ENCODE measurements at regions of chr1 and their contacts with region 1.

Region 1: DNA sequence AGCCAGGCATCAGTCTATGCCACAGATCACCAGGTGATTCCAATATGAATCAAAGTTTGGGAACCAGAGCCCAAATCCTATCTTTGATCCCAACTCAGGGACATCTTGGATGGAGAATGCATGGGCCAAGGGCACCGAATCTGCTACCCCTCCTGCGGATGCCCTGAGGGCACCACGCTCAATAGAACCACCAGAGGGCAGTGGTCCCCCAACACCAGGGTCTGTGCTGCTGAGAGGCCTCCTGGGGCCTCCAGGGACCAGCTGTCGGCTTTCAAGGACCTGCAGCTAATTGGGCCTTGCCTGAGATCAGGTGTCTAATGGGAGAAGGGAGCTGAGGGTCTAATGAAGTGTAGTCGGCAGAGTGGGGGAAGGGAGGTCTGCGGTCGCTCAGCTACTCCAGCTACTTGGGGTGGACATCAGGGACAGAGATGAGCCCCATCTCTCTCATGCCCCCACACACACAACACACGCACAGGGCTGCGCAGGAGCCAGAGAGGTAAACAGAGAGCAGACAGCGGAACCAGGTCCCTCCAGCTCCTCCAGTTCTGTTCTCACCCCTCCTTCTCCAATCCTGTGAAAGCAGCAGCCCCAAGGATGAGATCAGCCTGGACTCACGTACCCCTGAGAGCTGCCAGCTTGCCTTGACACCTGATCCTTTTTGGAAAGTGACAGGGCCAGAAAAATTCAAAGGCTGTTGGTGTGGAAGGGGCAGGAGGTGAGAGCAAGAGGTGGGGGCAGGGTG is 34.9 kb upstream of the PPP1R15B start:
- DNase-seq: no peak
- H3K4me3 ChIP-seq: no peak overlapping the region
- H3K27me3 ChIP-seq: no peaks in the 10 kb centered on the region
- CTCF ChIP-seq: peak; percentile 78

Region 2: DNA sequence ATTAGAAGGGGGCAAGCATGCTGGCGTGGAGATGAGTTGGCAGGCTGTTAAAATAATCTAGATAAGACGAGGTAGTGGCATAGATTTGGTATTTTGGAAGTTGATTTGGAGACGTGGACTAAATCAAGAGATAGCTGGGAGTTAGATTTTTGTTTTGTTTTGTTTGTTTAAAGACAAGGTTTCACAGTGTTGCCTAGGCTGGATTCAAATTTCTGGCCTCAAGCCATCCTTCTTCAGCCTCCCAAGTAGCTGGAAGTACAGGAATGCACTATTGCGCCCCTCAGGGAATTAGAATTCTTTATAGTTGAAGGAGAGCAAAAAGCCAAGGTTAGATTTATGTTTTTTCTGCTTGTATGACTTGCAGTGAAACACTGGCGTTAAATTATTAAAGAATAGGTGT is 607.5 kb before region 1 on chr1:
- CTCF ChIA-PET with region 1: no interaction called
- POLR2A ChIA-PET with region 1: no interaction called
- DNase-seq: no peak
- H3K4me3 ChIP-seq: no peak overlapping the region
- H3K27me3 ChIP-seq: no peaks in the 10 kb centered on the region
- CTCF ChIP-seq: no peak

Region 3: DNA sequence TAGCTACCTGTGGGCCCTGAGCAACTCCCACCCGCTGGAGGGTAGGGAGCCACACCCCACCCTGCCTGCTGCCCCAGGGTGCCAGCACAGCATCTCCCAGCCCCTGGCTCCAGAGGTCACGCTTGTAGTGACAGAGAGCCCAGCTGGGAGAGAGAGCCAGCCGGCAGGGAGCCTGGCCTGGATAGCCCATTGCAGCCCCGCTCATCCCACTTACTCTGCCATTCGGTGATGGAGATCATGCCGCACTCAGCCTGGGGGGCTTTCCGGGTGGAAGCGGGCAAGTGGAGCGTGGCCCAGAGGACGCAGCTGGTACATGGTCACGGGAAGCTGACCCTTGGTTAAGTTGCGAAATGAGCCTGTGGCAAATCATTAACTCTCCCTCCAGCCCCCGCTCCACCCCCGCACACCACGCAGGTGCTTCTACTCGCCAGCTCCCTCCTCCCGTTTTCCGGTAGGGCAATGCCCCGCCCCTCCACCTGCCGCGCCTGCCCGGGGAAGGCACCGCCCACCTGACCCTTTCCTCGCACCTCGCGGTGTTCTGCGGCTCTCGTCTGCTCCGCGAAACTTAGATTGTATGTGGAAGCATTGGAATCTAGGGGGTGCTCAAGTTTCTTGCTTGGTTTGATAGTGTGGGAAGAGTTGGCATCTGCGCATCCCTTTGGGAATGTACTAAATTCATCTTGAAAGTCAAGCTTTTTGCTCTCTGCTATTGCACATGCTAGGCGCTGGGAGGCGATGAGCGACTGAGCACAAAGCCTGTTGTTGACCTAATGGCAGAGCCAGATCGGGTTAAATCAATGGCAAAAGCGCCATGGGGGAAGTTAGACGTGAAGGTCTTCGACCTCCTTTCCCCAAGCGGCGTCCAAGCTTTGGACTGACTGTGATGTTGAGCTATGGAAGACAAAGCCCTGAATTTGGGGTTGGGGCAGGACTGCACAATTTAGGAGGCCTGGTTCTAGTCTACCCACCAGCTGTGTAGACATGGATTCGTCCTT is 232.6 kb before region 1 on chr1 and contains the start of gene GOLT1A:
- CTCF ChIA-PET with region 1: no interaction called
- POLR2A ChIA-PET with region 1: no interaction called
- DNase-seq: peak; percentile 32
- H3K4me3 ChIP-seq: no peak within 1 kb of the TSS
- H3K27me3 ChIP-seq: no peaks in the 10 kb centered on the region
- CTCF ChIP-seq: peak; percentile 87
- polyA plus RNA-seq, gene GOLT1A: 0.21 TPM in 2 replicates

Region 4: GRCh38 chr1:204363335-204364124 is 83.0 kb before region 1 on chr1:
- CTCF ChIA-PET with region 1: no interaction called
- POLR2A ChIA-PET with region 1: no interaction called
- DNase-seq: no peak
- H3K4me3 ChIP-seq: peak overlapping the region; percentile 27
- H3K27me3 ChIP-seq: no peaks in the 10 kb centered on the region
- CTCF ChIP-seq: peak; percentile 89

Region 5: GRCh38 chr1:204456826-204457442 is 10.4 kb after region 1 on chr1:
- CTCF ChIA-PET with region 1: interaction called, 33 read pairs
- POLR2A ChIA-PET with region 1: no interaction called
- DNase-seq: no peak
- H3K4me3 ChIP-seq: no peak overlapping the region
- H3K27me3 ChIP-seq: no peaks in the 10 kb centered on the region; the same call in 1 of the 2 replicates
- CTCF ChIP-seq: no peak

Region 6: GRCh38 chr1:204477036-204477740 is 30.6 kb after region 1 on chr1:
- CTCF ChIA-PET with region 1: interaction called, 17 read pairs
- POLR2A ChIA-PET with region 1: no interaction called
- DNase-seq: no peak
- H3K4me3 ChIP-seq: no peak overlapping the region
- H3K27me3 ChIP-seq: no peaks in the 10 kb centered on the region; the same call in 1 of the 2 replicates
- CTCF ChIP-seq: no peak

Region 7: DNA sequence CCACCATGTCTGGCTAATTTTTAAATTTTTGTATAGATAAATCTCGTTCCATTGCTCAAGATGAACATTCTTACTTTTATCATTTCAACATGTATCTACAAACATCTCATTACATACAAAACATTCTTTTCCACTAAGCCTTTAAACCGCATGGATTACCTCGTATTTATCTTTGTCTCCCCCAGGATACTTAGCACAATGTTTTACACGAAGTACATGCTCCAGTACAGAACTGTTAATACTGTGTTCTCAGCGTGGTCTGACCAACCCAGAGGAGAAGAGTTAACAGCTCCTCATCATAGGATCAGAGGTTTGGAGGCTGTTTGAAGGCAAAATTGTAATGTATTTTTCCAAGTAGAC is 40.7 kb after region 1 on chr1:
- CTCF ChIA-PET with region 1: interaction called, 78 read pairs
- POLR2A ChIA-PET with region 1: no interaction called
- DNase-seq: no peak
- H3K4me3 ChIP-seq: no peak overlapping the region
- H3K27me3 ChIP-seq: peaks cover 1% of the 10 kb centered on the region
- CTCF ChIP-seq: no peak

Region 8: GRCh38 chr1:204494281-204495077 is 47.9 kb after region 1 on chr1 and contains the start of gene PIK3C2B:
- CTCF ChIA-PET with region 1: interaction called, 194 read pairs
- POLR2A ChIA-PET with region 1: no interaction called
- DNase-seq: no peak
- H3K4me3 ChIP-seq: peak within 1 kb of the TSS; percentile 64
- H3K27me3 ChIP-seq: peaks cover 3% of the 10 kb centered on the region
- CTCF ChIP-seq: peak; percentile 53
- polyA plus RNA-seq, gene PIK3C2B: 5.1 and 7.9 TPM in 2 replicates

Region 9: DNA sequence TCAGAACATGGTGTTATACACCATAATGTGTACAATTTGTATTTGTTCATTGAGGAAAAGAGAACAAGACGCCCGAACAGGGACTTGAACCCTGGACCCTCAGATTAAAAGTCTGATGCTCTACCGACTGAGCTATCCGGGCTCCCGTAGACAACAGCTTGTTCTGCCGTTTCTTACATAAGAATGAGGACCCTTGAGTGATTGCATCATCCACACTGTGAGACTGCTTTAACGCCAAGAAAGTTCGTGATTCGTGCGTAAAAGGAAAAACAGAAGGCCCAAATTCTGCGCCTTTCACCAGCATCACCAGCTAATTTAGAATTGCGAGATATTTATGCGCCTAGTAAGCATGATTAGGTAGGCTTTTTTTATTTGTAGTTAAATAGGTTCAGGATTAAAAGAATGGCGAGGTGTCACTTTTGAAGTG is 60.4 kb after region 1 on chr1:
- CTCF ChIA-PET with region 1: interaction called, 194 read pairs
- POLR2A ChIA-PET with region 1: no interaction called
- DNase-seq: peak; percentile 75
- H3K4me3 ChIP-seq: peak overlapping the region; percentile 37
- H3K27me3 ChIP-seq: no peaks in the 10 kb centered on the region
- CTCF ChIP-seq: no peak

Region 10: DNA sequence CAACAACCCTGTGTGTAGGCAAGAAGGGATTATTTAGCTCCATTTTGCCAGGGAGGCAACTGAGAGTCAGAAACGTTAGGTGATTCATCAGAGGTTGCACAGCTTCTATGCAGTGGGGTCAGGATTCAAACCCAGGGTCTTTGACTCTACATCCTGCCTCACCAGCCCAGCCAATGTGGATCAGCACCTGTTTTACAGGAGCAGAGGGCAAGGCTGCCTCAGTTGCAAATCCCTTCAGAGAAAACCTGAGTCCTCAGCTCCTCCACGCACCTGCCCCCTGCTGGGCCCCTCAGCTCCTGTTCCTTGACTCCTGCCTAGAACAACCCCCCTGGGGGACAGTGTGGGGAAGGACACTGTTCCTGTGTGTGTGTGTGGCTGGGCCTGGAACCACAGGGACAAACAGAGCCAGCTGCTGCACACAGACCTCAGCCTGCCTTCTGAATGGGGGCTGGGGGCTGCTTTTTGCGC is 177.4 kb after region 1 on chr1:
- CTCF ChIA-PET with region 1: no interaction called
- POLR2A ChIA-PET with region 1: no interaction called
- DNase-seq: no peak
- H3K4me3 ChIP-seq: no peak overlapping the region
- H3K27me3 ChIP-seq: peaks cover 10% of the 10 kb centered on the region
- CTCF ChIP-seq: 0 out of 2 replicates have a peak, but pooled peaks have one; percentile 14

Measured in BJ (cell line).